CD14-positive monocyte (primary cell): ENCODE measurements at regions of chr5 and their contacts with region 1.

Region 1: DNA sequence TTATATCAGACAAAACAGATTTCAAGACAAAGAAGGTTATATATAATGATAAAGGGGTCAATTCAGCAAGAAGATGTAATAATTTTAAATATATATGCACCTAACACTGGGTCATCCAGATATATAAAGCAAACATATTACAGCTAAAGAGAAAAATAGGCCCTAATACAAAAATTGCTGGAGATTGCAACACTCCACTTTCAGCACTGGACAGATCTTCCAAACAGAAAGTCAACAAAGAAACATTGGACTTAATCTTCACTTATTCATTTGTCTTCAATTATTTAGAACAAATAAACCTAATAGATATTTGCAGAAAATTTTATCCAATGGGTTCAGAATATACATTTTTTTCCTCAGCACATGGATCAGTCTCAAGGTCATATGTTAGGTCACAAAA is 45.8 kb downstream of the MEIKIN start:
- DNase-seq: no peak
- H3K4me3 ChIP-seq: no peak overlapping the region
- H3K4me3 Mint-ChIP-seq: no peak overlapping the region
- H3K27ac ChIP-seq: no peak overlapping the region
- H3K27ac Mint-ChIP-seq: no peak overlapping the region
- H3K4me1 ChIP-seq: no peaks in the 10 kb centered on the region
- H3K4me1 Mint-ChIP-seq: no peaks in the 10 kb centered on the region
- H3K27me3 ChIP-seq: no peaks in the 10 kb centered on the region
- H3K27me3 Mint-ChIP-seq: peaks cover 0 to 11% (median 1%) of the 10 kb centered on the region in 3 donors
- CTCF ChIP-seq: no peak

Region 2: GRCh38 chr5:130616161-130616560 is 1283.5 kb before region 1 on chr5:
- intact Hi-C with region 1: loop called in 1 of 2 experiments (anchors 10 kb)
- DNase-seq: no peak
- H3K4me3 ChIP-seq: no peak overlapping the region
- H3K4me3 Mint-ChIP-seq: no peak overlapping the region
- H3K27ac ChIP-seq: no peak overlapping the region
- H3K27ac Mint-ChIP-seq: no peak overlapping the region
- H3K4me1 ChIP-seq: no peaks in the 10 kb centered on the region
- H3K4me1 Mint-ChIP-seq: no peaks in the 10 kb centered on the region
- H3K27me3 ChIP-seq: no peaks in the 10 kb centered on the region
- H3K27me3 Mint-ChIP-seq: no peaks in the 10 kb centered on the region
- CTCF ChIP-seq: no peak